ENCODE measurements at regions of chr4 and their contacts with region 1.

Region 1: GRCh38 chr4:130563185-130563888 is 1467.4 kb downstream of the C4orf33 start:
- DNase-seq: peak; percentile 83
- H3K4me3 ChIP-seq: peak overlapping the region; percentile 39
- H3K27ac ChIP-seq: no peak overlapping the region
- H3K4me1 ChIP-seq: no peaks in the 10 kb centered on the region
- H3K27me3 ChIP-seq: no peaks in the 10 kb centered on the region
- CTCF ChIP-seq: peak; percentile 74

Region 2: DNA sequence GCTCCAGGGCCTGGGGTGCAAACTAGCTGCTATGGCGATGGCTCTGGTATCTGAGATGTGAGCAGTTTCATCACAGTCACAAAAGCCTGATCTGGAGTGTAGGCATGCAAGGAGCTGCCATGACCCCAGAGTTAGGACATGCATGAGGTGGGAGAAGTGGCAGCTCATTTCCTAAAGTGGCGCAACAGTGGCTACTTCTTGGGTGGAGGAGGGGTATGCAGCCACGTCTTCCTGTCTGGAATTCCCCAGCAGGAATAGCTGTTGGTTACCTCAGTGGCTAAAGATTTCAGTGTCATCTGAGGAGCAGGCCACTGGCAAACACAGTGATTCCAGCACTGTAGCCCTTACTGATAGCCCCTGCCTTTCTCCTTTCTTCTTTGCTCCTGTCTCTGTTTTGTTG is 84.9 kb before region 1 on chr4:
- CTCF ChIA-PET with region 1: no interaction called
- POLR2A ChIA-PET with region 1: no interaction called
- intact Hi-C with region 1: no loop called
- DNase-seq: no peak
- H3K4me3 ChIP-seq: no peak overlapping the region
- H3K27ac ChIP-seq: no peak overlapping the region
- H3K4me1 ChIP-seq: no peaks in the 10 kb centered on the region
- H3K27me3 ChIP-seq: no peaks in the 10 kb centered on the region
- CTCF ChIP-seq: no peak

Region 3: DNA sequence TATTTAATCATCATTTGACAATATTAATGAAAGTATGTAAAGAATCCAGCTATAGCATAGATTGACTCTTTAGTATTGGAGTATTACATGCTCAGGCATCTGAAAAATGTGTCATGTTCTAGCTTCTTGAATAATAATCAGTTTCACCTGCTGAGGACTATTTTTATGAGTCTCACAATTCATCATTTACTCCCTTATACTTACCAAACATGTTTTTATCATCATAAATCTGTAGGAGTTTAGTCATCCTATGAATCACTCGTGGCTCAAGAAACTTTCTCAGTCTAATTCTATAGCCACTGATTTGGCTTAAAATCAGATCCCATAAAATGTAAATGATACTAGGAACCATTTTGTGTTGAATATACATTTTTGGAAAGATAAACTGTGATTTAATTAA is 148.7 kb after region 1 on chr4:
- CTCF ChIA-PET with region 1: no interaction called
- POLR2A ChIA-PET with region 1: no interaction called
- intact Hi-C with region 1: no loop called
- DNase-seq: peak; percentile 50
- H3K4me3 ChIP-seq: no peak overlapping the region
- H3K27ac ChIP-seq: no peak overlapping the region
- H3K4me1 ChIP-seq: no peaks in the 10 kb centered on the region
- H3K27me3 ChIP-seq: no peaks in the 10 kb centered on the region
- CTCF ChIP-seq: no peak

Region 4: DNA sequence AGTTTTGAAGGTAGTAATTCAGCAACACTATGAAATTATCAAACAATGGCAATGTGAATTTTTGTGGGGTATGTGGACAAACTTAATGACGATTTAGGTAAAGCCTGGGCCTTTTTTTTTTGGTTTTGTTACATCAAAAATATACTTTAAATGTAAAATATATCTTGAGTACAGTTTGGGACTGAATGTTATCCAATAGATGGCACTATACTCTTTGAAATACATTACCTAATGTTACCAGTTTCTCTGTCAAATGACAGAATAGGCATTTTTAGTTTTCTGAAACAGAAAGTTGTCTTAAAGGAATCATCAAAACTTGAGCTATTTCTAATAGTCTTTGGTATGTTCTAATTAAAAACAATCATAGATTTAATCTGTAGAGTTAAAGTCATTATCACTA is 184.5 kb after region 1 on chr4:
- CTCF ChIA-PET with region 1: no interaction called
- POLR2A ChIA-PET with region 1: no interaction called
- intact Hi-C with region 1: loop called (anchors 5 kb)
- DNase-seq: peak; percentile 29
- H3K4me3 ChIP-seq: no peak overlapping the region
- H3K27ac ChIP-seq: no peak overlapping the region
- H3K4me1 ChIP-seq: no peaks in the 10 kb centered on the region
- H3K27me3 ChIP-seq: no peaks in the 10 kb centered on the region
- CTCF ChIP-seq: peak; percentile 61

Region 5: DNA sequence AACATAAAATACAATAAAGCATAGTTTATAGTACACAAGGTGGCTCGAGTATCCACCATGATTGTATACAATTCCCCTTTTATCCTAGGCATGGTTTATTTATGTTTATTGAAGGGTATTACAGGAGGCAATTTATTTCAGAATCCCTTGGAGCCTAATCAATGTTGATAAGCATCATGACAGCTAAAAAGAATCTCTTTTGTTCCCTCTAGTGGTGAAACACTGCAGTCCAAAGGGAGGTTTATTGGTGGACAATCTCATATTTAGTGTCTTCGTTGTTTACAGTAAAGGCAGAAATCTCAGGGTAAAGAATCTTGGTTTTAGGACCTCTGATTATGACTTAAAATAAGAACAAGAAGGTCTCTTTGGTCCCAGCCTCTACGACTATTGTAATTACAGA is 245.2 kb after region 1 on chr4:
- CTCF ChIA-PET with region 1: interaction called, 10 read pairs
- POLR2A ChIA-PET with region 1: no interaction called
- intact Hi-C with region 1: loop called (anchors 5 kb)
- DNase-seq: peak; percentile 70
- H3K4me3 ChIP-seq: no peak overlapping the region
- H3K27ac ChIP-seq: no peak overlapping the region
- H3K4me1 ChIP-seq: peaks cover 24% of the 10 kb centered on the region
- H3K27me3 ChIP-seq: no peaks in the 10 kb centered on the region
- CTCF ChIP-seq: peak; percentile 79

Measured in A673 (cell line).